ENCODE measurements at regions of chr1 and their contacts with region 1.

Region 1: GRCh38 chr1:61184040-61184713 is 101.8 kb downstream of the NFIA start:
- DNase-seq: peak; percentile 88
- H3K4me3 ChIP-seq: peak overlapping the region in 3 of 4 donors; percentile 19 to 41 (median 25)
- H3K27ac ChIP-seq: peak overlapping the region; percentile 81 to 88 (median 84)
- H3K4me1 ChIP-seq: peaks cover 6 to 52% (median 34%) of the 10 kb centered on the region in 4 donors
- H3K27me3 ChIP-seq: no peaks in the 10 kb centered on the region
- CTCF ChIP-seq: no peak
- EP300 ChIP-seq: no peak
- POLR2A ChIP-seq: no peak

Region 2: DNA sequence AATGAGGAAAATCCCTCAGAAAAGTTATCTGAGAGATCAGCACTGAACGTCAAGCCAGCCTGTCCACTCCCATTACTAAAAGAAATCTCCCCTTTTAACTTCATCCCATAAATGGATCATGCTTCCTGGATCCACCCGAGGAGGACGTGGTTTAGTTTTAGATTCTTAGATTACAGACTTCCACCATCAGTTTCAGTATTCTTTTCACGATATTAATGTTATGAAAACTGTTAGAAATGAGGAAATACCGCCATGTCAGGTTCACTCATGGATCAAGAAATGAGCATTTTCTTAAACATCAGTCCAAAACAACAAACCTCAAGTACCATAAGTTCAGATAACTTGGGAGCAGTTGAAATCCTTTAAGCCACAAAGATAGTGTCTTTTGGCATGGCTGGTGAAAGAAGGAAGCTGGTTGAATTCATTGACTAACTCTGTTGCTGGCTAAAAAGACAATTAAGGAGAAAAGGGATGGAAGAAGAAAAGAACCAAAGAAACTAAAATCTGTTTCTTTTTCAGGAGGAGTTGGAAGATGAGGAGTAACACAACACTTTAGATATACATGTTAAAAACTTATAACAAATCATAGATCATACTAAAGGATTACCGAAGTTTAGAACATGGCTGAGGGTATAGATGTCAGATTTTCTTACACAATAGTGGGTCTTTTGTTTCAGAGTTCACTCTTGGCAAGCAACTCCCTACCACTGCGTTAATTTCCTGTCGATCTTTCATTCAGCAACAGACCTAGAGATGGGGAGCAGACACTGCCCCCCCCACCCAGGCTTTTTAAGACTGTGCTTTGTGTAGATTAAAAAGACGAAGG is 51.8 kb before region 1 on chr1:
- in situ Hi-C with region 1: no loop called
- intact Hi-C with region 1: loop called (anchors 1 kb)
- DNase-seq: no peak
- H3K4me3 ChIP-seq: peak overlapping the region in 1 of 4 donors; percentile 11
- H3K27ac ChIP-seq: peak overlapping the region; percentile 66 to 78 (median 78)
- H3K4me1 ChIP-seq: peaks cover 8 to 29% (median 21%) of the 10 kb centered on the region in 4 donors
- H3K27me3 ChIP-seq: no peaks in the 10 kb centered on the region
- CTCF ChIP-seq: no peak
- EP300 ChIP-seq: no peak
- POLR2A ChIP-seq: no peak